ENCODE measurements at regions of chr4 and their contacts with region 1.

Region 1: DNA sequence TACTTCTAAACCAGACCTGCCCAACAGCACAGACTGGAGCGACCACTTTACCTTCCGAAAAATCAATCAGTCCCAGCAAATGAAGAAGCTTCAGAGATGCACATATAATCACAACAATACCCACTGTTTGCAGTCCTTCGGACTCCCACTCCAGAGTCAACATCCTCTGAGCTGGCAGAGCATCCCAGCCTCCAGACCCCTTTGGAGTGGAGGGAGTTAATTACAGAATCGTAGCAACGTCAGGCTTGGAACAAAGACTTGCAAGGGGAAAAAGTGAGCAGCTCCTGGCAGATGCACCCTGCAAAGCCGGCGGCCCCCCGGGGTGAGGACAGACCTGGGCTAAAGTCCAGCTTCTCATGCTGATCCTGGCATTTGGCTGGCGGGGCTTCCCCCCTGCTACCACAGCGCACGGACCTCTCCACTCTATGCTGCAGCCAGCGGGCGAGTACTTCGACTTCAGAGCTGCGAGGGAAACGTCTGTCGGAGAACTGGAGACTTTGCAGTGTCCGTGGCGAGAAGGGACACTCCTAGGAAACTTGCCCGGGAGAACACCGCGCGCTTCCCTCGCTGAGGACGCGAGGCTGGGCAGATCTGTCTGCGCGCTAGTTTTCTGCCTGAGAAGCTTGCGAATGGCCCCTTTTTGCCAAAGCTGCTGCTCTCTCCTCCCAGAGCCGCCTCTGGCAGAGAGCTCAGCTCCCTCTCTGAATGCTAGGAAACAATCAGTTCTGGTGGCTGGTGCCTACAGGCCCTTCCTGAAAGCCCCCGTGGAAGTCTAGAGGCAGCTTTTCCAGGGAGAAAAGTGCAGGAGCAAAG is 283.7 kb downstream of the PACRGL start:
- DNase-seq: no peak
- ATAC-seq: no peak
- H3K4me3 ChIP-seq: no peak overlapping the region
- H3K4me3 Mint-ChIP-seq: no peak overlapping the region
- H3K27ac ChIP-seq: no peak overlapping the region
- H3K27ac Mint-ChIP-seq: no peak overlapping the region
- H3K4me1 ChIP-seq: no peaks in the 10 kb centered on the region
- H3K4me1 Mint-ChIP-seq: no peaks in the 10 kb centered on the region
- H3K27me3 ChIP-seq: no peaks in the 10 kb centered on the region
- H3K27me3 Mint-ChIP-seq: peaks cover 0 to 30% (median 0%) of the 10 kb centered on the region in 5 donors

Region 2: GRCh38 chr4:20859097-20859781 is 124.7 kb before region 1 on chr4:
- CTCF ChIA-PET with region 1: no interaction called
- POLR2A ChIA-PET with region 1: no interaction called
- intact Hi-C with region 1: loop called in 1 of 2 experiments (anchors 10 kb)
- DNase-seq: no peak
- ATAC-seq: no peak
- H3K4me3 ChIP-seq: no peak overlapping the region
- H3K4me3 Mint-ChIP-seq: no peak overlapping the region
- H3K27ac ChIP-seq: no peak overlapping the region
- H3K27ac Mint-ChIP-seq: no peak overlapping the region
- H3K4me1 ChIP-seq: no peaks in the 10 kb centered on the region
- H3K4me1 Mint-ChIP-seq: peaks cover 0 to 4% (median 0%) of the 10 kb centered on the region in 7 donors
- H3K27me3 ChIP-seq: no peaks in the 10 kb centered on the region
- H3K27me3 Mint-ChIP-seq: no peaks in the 10 kb centered on the region